Activated CD4-positive, alpha-beta T cell treated with anti-CD3 and anti-CD28 coated beads, Interleukin-2, amount 10 ng/mL, durations not matched to agents 24 days and 14 days (primary cell): ENCODE measurements at regions of chr11 and their contacts with region 1.

Region 1: GRCh38 chr11:133956650-133957633 is at the start of gene IGSF9B:
- DNase-seq: peak; percentile 98
- H3K4me3 Mint-ChIP-seq: peak within 1 kb of the TSS; percentile 96
- H3K27ac Mint-ChIP-seq: peak within 1 kb of the TSS; percentile 89
- H3K4me1 Mint-ChIP-seq: peaks cover 50% of the 10 kb centered on the region
- H3K27me3 Mint-ChIP-seq: peaks cover 19% of the 10 kb centered on the region
- total RNA-seq, gene IGSF9B: 90.5 and 91.8 TPM in 2 replicates

Region 2: DNA sequence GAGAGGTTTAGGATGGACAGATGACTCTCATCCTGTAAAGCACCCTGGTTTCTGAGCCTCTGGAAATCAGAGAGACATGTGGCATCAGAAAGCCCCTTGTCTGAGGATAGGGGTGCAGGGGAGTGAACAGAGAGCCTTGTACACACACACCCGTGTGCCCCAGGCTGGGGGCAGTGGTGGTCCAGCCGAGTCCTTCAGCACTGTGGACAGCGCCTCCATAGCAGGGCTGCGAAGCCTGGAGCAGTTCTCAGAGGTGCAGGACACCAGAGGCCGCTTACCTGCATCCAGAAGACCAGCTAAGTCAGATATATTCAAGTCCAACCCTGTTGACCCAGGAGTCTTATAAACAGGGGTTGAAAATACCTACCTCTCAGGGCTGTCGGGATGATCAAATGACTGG is 11.4 kb after region 1 on chr11:
- intact Hi-C with region 1: loop called (anchors 1 kb)
- DNase-seq: no peak
- H3K4me3 Mint-ChIP-seq: no peak overlapping the region
- H3K27ac Mint-ChIP-seq: no peak overlapping the region
- H3K4me1 Mint-ChIP-seq: peaks cover 10% of the 10 kb centered on the region
- H3K27me3 Mint-ChIP-seq: peaks cover 41% of the 10 kb centered on the region